GM18951 (cell line): ENCODE measurements at regions of chr5 and their contacts with region 1.

Region 1: GRCh38 chr5:90191352-90192045 is 218.1 kb downstream of the CETN3 start:
- POLR2A ChIP-seq: no peak

Region 2: DNA sequence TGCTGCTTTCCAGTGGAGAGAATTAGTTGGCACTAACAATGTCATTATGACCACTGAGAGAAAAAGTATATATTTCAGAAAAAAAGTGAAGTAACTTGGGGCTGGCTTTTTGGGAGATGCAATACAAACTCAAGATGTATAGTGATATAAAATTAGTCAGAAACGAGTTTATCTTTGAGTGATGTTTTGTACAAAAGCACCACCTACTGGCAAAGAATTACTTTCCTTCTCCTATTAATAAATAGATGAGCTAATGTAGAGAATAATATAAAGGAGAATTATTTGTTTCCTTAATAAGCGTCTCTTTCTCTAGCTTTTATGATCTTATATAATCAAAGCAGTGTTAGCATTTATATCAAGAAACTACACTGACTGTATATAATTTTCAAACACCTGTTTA is 1467.3 kb before region 1 on chr5:
- in situ Hi-C with region 1: loop called (anchors 25 kb)
- POLR2A ChIP-seq: no peak

Region 3: GRCh38 chr5:90424245-90424644 is 232.7 kb after region 1 on chr5:
- in situ Hi-C with region 1: no loop called
- POLR2A ChIP-seq: no peak